Activated CD4-positive, alpha-beta memory T cell treated with anti-CD3 and anti-CD28 coated beads for 36 hours (primary cell): ENCODE measurements at regions of chr10 and their contacts with region 1.

Region 1: GRCh38 chr10:97914837-97915211 is 65.2 kb downstream of the GOLGA7B start:
- DNase-seq: peak; percentile 85
- H3K4me3 Mint-ChIP-seq: no peak overlapping the region
- H3K27ac Mint-ChIP-seq: no peak overlapping the region
- H3K4me1 Mint-ChIP-seq: peaks cover 7% of the 10 kb centered on the region
- H3K27me3 Mint-ChIP-seq: peaks cover 6% of the 10 kb centered on the region

Region 2: GRCh38 chr10:97903128-97904017 is 11.5 kb before region 1 on chr10:
- CTCF ChIA-PET with region 1: interaction called, 15 read pairs
- POLR2A ChIA-PET with region 1: no interaction called
- intact Hi-C with region 1: no loop called
- DNase-seq: no peak
- H3K4me3 Mint-ChIP-seq: no peak overlapping the region
- H3K27ac Mint-ChIP-seq: no peak overlapping the region
- H3K4me1 Mint-ChIP-seq: no peaks in the 10 kb centered on the region
- H3K27me3 Mint-ChIP-seq: peaks cover 15% of the 10 kb centered on the region

Region 3: GRCh38 chr10:98028168-98028770 is 113.4 kb after region 1 on chr10:
- CTCF ChIA-PET with region 1: interaction called, 28 read pairs
- POLR2A ChIA-PET with region 1: no interaction called
- intact Hi-C with region 1: loop called (anchors 5 kb)
- DNase-seq: peak; percentile 74
- H3K4me3 Mint-ChIP-seq: no peak overlapping the region
- H3K27ac Mint-ChIP-seq: no peak overlapping the region
- H3K4me1 Mint-ChIP-seq: peaks cover 4% of the 10 kb centered on the region
- H3K27me3 Mint-ChIP-seq: peaks cover 50% of the 10 kb centered on the region

Region 4: GRCh38 chr10:98045785-98046389 is 131.1 kb after region 1 on chr10:
- CTCF ChIA-PET with region 1: interaction called, 229 read pairs
- POLR2A ChIA-PET with region 1: interaction called, 3 read pairs
- intact Hi-C with region 1: loop called (anchors 1 kb)
- DNase-seq: peak; percentile 73
- H3K4me3 Mint-ChIP-seq: no peak overlapping the region
- H3K27ac Mint-ChIP-seq: no peak overlapping the region
- H3K4me1 Mint-ChIP-seq: peaks cover 3% of the 10 kb centered on the region
- H3K27me3 Mint-ChIP-seq: peaks cover 23% of the 10 kb centered on the region